Activated CD8-positive, alpha-beta T cell treated with anti-CD3 and anti-CD28 coated beads for 36 hours (primary cell): ENCODE measurements at regions of chr17 and their contacts with region 1.

Region 1: DNA sequence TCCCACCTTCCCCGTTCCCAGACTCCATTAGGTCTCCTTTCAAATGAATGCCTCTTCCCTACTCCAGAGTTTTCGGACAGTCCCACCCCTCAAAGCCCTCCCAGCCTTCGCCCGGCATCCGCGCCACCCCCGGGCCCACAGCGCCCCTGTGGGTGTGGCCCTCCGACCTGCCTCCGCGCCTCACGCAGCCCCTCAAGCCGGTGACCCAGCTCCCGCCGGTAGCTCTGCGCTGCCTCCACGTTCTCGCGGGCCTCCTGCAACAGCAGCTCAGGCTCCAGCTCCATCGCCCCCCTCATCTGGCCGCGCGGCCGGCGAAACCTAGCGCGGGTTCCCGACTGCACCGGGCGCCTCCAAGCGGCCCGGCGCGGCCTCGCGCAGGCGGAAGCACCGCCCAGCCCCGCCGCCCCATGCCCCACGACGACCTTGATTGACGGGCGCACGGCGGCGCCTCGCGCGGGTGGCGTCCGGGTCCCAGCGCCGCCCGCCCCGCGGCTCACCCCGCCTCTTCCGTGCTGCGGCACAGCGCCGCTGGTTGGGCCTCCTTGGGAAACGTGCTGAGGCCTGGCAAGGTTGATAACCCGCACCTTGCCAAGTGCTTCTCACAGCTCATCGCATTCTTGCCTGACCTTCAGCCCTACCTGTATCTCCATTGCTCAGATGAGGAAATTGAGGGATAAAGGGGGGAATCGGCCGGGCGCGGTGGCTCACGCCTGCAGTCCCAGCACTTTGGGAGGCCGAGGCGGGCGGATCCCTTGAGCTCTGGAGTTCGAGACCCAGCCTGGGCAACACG is at the start of gene CRLF3:
- DNase-seq: peak; percentile 92
- ATAC-seq: peak; percentile 93
- H3K4me3 Mint-ChIP-seq: peak within 1 kb of the TSS; percentile 86
- H3K27ac Mint-ChIP-seq: peak within 1 kb of the TSS; percentile 96
- H3K4me1 Mint-ChIP-seq: peaks cover 33% of the 10 kb centered on the region
- H3K27me3 Mint-ChIP-seq: no peaks in the 10 kb centered on the region
- CTCF ChIP-seq: peak; percentile 65
- total RNA-seq, gene CRLF3: 40.3 to 42.5 TPM

Region 2: DNA sequence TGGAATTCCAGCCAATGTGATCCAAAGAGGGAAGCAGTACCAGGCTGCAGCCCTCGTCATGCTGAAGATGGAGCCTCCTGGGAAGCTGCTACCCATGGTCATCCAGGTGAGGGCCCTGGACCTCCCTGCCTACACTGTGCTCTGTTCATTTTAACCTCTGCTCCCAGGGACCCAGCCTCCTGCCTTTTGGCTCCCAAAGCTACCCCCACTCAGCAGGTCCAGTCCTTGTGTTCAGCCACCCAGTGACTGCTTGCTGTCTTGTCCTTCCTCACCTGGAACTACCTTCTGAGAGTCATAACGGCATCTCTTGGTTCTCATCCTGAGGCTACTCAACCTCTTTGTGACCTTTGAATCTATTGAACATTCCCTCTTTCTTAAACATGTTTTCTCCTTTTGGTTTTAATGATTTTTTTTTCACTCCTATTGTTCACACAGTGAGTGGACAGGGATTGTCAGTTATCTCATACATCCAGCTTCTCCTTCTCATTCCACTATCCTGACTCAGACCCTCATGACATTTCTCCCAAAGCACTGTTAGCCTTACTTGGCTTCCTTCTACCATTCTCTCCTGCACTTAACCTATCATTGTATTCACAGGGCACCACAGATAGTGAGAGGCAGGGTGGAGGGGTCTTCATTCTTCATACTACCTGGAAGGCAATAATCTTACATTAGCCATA is 294.1 kb before region 1 on chr17:
- CTCF ChIA-PET with region 1: no interaction called
- POLR2A ChIA-PET with region 1: no interaction called
- intact Hi-C with region 1: no loop called
- DNase-seq: no peak
- ATAC-seq: no peak
- H3K4me3 Mint-ChIP-seq: no peak overlapping the region
- H3K27ac Mint-ChIP-seq: no peak overlapping the region
- H3K4me1 Mint-ChIP-seq: no peaks in the 10 kb centered on the region
- H3K27me3 Mint-ChIP-seq: no peaks in the 10 kb centered on the region
- CTCF ChIP-seq: no peak

Region 3: DNA sequence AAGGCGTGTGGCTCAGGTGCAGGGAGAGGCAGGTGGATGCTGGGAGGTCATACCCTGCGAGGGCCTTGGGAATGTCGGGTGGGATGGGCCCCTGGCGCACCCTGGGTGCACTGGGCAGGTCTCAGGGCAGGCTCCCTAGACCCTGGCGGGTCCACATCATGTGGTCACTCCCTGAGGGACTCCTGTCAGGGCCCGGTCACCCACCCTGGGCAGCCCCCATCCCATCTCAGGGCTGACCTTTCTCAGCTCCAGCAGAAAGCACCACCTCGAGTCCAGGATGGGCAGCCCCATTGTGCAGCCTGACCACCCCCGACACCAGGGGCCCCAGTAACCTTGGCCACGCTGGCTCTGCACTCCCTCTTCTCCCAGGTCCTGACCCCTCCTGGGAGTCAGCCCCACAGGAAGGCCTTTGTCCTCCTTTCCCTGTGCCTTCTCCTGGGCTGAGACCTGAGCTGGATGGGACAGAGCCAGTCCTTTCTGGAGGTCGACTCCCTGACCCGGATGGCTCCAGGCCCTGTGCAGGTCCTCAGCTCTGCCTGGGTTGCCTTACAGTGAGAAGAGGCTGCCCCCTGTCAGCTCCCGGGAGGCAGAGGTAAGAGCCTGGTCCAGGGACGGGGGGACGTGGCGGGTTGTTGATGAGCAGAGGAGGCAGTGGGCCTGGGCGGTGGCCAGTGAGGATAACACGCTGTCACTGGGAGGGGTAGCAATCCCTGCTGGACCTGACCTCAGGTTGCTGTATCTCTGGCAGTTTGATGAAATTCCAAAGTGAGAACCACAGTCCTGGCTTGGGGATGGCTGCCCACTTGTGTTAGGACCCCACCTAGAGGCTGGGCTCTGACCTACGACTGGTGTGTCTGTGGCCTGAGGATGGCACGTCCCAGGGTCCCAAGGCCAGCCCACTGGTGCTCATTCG is 269.5 kb before region 1 on chr17:
- CTCF ChIA-PET with region 1: no interaction called
- POLR2A ChIA-PET with region 1: no interaction called
- intact Hi-C with region 1: no loop called
- DNase-seq: peak; percentile 15
- ATAC-seq: no peak
- H3K4me3 Mint-ChIP-seq: no peak overlapping the region
- H3K27ac Mint-ChIP-seq: no peak overlapping the region
- H3K4me1 Mint-ChIP-seq: peaks cover 4% of the 10 kb centered on the region
- H3K27me3 Mint-ChIP-seq: no peaks in the 10 kb centered on the region
- CTCF ChIP-seq: no peak

Region 4: DNA sequence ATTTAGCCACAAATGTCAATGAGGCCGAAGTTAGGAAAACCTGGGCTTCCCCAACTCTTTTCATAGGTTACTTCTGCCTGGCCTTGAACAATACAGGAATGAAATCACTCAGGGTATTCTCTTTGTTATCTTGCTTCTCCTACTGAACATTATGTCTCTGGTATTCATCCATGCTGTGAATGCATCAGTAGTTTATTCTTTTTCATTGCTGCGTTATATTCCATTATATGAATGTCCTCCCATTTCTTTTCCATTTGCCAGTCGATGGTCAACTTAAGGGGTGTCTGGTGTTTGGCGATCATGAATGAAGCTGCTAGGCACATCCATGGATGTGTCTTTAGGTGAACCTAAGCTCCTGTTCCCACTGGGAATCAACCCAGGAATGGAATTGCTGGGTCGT is 128.3 kb before region 1 on chr17:
- CTCF ChIA-PET with region 1: no interaction called
- POLR2A ChIA-PET with region 1: no interaction called
- intact Hi-C with region 1: no loop called
- DNase-seq: no peak
- ATAC-seq: no peak
- H3K4me3 Mint-ChIP-seq: no peak overlapping the region
- H3K27ac Mint-ChIP-seq: no peak overlapping the region
- H3K4me1 Mint-ChIP-seq: peaks cover 8% of the 10 kb centered on the region
- H3K27me3 Mint-ChIP-seq: peaks cover 8% of the 10 kb centered on the region
- CTCF ChIP-seq: no peak

Region 5: DNA sequence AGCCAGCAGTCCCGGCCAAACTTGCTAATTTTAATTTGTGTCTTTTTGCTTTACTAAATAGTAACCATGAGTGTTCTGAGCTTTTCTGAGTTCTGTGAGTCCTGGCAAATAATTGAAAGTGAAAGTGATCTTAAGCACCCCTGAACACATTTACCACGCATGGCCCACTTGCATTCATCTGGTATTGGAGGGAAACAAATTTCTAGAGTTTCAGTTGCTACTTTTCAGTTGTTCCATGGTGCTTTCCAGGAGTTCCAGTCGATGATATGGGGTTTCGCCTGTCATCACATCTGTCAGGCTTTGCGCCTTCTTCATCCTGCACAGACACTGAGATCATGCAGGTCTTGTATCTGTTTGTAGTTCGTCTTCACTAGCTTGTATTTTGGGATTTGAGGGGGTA is 44.2 kb before region 1 on chr17:
- CTCF ChIA-PET with region 1: interaction called, 4 read pairs
- POLR2A ChIA-PET with region 1: interaction called, 11 read pairs
- intact Hi-C with region 1: no loop called
- DNase-seq: peak; percentile 61
- ATAC-seq: peak; percentile 85
- H3K4me3 Mint-ChIP-seq: no peak overlapping the region
- H3K27ac Mint-ChIP-seq: peak overlapping the region; percentile 86
- H3K4me1 Mint-ChIP-seq: peaks cover 23% of the 10 kb centered on the region
- H3K27me3 Mint-ChIP-seq: no peaks in the 10 kb centered on the region
- CTCF ChIP-seq: no peak

Region 6: GRCh38 chr17:30788918-30789317 is 35.6 kb before region 1 on chr17:
- CTCF ChIA-PET with region 1: interaction called, 27 read pairs
- POLR2A ChIA-PET with region 1: interaction called, 4 read pairs
- intact Hi-C with region 1: no loop called
- DNase-seq: no peak
- ATAC-seq: no peak
- H3K4me3 Mint-ChIP-seq: no peak overlapping the region
- H3K27ac Mint-ChIP-seq: peak overlapping the region; percentile 73
- H3K4me1 Mint-ChIP-seq: peaks cover 20% of the 10 kb centered on the region
- H3K27me3 Mint-ChIP-seq: no peaks in the 10 kb centered on the region
- CTCF ChIP-seq: no peak

Region 7: DNA sequence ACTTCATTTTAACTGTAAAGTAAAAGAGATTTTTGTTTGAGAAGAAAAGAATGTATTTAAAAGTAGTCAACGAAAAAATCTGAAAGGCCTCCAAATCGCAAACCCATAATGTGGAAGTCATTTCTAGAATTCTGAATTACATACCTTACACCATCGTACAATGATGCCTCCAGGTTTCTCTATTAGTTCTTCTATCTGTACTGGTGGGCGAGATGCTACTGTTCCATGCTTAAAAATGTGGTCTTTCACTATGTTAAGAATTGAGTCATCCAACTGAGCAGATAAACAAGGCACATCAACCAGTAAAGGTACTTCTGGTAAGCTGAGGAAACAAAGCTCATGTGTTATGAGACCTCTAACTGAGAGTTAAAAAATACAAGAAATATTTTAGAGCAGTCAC is 28.5 kb before region 1 on chr17:
- CTCF ChIA-PET with region 1: interaction called, 32 read pairs
- POLR2A ChIA-PET with region 1: interaction called, 19 read pairs
- intact Hi-C with region 1: no loop called
- DNase-seq: no peak
- ATAC-seq: peak; percentile 97
- H3K4me3 Mint-ChIP-seq: no peak overlapping the region
- H3K27ac Mint-ChIP-seq: peak overlapping the region; percentile 87
- H3K4me1 Mint-ChIP-seq: peaks cover 17% of the 10 kb centered on the region
- H3K27me3 Mint-ChIP-seq: no peaks in the 10 kb centered on the region
- CTCF ChIP-seq: no peak

Region 8: DNA sequence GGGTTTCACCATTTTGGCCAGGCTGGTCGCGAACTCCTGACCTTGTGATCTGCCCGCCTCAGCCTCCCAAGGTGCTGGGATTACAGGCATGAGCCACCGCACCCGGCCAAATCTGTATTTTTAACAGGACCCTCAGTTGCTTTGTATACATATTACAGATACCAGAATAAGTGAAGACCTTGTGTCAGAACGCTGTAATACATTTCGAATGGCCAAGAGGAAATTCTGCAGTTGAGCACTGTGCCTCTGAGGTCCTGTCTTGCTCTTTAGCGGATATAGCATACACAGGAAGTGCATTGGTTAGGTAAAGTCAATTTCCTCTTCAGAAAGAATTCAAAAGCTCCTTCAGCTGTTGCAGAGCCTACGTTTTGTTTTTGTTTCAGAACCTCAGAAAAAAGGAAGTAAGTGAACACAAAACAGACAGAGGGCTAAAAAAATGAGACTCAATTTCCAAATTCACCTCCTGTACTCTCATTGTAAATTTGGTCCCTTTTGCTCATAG is 15.7 kb before region 1 on chr17:
- CTCF ChIA-PET with region 1: interaction called, 96 read pairs
- POLR2A ChIA-PET with region 1: interaction called, 126 read pairs
- intact Hi-C with region 1: loop called (anchors 2 kb)
- DNase-seq: peak; percentile 54
- ATAC-seq: peak; percentile 76
- H3K4me3 Mint-ChIP-seq: peak overlapping the region; percentile 82
- H3K27ac Mint-ChIP-seq: peak overlapping the region; percentile 99
- H3K4me1 Mint-ChIP-seq: peaks cover 65% of the 10 kb centered on the region
- H3K27me3 Mint-ChIP-seq: no peaks in the 10 kb centered on the region
- CTCF ChIP-seq: no peak

Region 9: DNA sequence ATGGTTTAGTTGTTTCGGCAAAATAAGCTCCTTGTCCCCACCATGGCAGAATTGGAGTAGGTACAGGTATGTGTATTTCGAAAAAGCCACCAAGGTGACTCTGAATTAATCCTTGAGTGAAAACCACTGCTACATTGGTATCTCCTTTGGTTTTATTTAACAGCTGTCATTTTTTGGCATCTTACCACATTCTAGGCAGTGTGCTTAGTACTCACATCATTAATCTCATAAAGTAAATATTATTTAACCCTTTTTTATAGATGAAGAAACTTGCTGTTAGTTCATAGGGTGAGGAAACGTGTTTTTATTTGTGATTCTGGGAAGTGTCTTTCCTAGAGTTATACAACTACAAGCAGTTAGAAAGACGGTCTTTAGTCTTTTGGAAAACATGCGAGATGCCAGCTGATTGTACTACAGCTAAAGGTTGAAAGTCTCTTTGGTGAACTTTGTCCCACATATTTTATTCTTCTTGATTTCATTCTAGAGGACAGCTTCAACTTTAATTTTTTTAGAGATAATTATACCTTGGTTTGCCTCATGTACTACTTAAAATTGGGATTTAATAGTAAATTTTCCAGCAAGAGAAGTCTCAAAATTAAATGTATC is 13.8 kb after region 1 on chr17:
- CTCF ChIA-PET with region 1: interaction called, 13 read pairs
- POLR2A ChIA-PET with region 1: interaction called, 8 read pairs
- intact Hi-C with region 1: no loop called
- DNase-seq: no peak
- ATAC-seq: no peak
- H3K4me3 Mint-ChIP-seq: no peak overlapping the region
- H3K27ac Mint-ChIP-seq: no peak overlapping the region
- H3K4me1 Mint-ChIP-seq: peaks cover 13% of the 10 kb centered on the region
- H3K27me3 Mint-ChIP-seq: no peaks in the 10 kb centered on the region
- CTCF ChIP-seq: no peak